Colonic mucosa (tissue), 4 donors: ENCODE measurements at regions of chr9 and their contacts with region 1.

Region 1: DNA sequence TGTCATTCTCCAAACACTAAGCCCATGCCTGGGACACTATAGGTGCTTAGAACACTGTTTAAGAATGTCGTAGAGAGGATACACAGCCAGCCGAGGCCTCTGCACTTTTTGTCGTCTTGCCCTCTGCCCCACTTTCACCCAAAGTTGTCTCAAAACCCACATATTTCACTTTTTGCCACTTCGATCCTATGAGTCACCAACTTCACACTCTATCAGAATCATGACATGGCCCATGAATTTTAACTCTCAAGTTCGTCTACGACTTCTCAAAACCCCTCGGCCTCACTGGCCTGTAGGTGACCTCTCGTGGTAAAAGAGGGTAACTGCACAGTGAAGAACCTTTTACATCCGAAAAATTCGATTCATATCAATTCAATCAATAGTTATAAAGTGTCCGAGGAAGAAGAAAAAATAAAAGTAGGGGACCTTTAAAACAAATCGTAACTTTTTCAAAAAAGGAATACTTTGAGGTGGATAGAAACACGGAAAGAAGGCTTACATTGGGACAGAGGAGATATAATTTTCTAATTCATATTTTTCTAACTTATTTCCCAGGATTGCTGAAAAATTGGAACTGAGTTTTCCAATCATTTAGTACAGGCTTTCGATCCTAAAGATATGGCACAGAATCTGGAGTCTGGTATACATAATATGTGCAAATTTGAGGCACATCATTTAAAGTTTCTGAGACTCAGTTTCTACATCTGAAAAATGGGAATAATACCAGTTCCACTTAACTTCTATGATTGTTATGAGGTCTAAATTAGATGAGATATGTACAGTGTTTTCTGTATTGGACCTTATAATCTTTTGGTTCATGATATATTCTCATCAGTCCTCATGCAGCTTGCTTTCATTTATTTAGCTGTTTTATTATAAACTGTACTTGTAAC is 122.6 kb downstream of the APBA1 start:
- DNase-seq: peak; percentile 31
- H3K4me3 ChIP-seq: no peak overlapping the region
- H3K27ac ChIP-seq: no peak overlapping the region
- H3K4me1 ChIP-seq: no peaks in the 10 kb centered on the region
- H3K27me3 ChIP-seq: no peaks in the 10 kb centered on the region
- CTCF ChIP-seq: peak; percentile 76

Region 2: GRCh38 chr9:68476847-68477246 is 1072.7 kb before region 1 on chr9:
- intact Hi-C with region 1: no loop called
- DNase-seq: no peak
- H3K4me3 ChIP-seq: no peak overlapping the region
- H3K27ac ChIP-seq: no peak overlapping the region
- H3K4me1 ChIP-seq: no peaks in the 10 kb centered on the region
- H3K27me3 ChIP-seq: no peaks in the 10 kb centered on the region
- CTCF ChIP-seq: no peak

Region 3: DNA sequence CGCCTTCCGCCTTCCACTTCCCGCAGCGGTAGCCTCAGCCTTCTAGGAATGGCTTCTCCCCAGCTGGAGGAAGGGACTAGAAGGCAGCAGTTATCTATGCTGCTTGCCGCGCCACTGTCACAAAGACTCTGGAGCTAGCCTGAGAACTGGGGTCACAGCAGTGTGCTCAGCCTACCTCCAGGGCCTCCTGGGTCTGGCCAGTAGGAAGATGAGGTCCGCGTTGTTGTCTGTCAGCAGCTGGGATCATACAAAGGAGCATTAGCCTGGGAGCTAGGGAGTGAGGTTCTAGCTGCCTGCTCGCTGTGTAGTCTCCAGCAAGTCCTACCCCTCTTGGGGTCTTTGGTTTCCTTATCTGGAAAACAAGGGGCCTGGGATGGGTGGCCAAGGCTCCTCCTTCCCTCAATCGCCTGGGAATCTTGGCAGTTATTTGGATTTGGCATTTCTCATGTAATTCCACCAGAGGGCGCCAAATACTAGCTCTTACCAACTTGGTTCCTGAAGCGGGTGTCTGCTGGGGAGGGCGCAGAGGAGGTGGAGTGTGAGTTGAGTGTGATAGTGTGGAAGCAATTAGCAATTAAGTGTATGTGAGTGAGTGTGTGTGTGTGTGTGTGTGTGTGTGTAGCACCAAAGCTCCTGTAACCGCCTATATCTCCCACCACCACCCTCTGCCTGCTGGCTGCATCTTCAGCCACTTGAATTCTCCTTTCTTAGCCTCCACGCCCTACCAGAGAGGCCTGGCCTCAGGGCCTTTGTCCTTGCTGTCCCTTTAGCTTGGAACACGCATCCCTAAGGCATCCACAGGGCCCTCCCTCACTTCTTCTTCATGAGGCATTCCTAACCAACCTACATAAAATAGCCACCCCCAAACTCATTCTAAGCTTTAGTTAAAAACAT is 127.4 kb before region 1 on chr9:
- intact Hi-C with region 1: loop called (anchors 2 kb)
- DNase-seq: peak; percentile 62
- H3K4me3 ChIP-seq: no peak overlapping the region
- H3K27ac ChIP-seq: no peak overlapping the region
- H3K4me1 ChIP-seq: no peaks in the 10 kb centered on the region
- H3K27me3 ChIP-seq: no peaks in the 10 kb centered on the region
- CTCF ChIP-seq: peak; percentile 78

Region 4: GRCh38 chr9:69466151-69466550 is 83.4 kb before region 1 on chr9:
- intact Hi-C with region 1: loop called (anchors 10 kb)
- DNase-seq: no peak
- H3K4me3 ChIP-seq: no peak overlapping the region
- H3K27ac ChIP-seq: no peak overlapping the region
- H3K4me1 ChIP-seq: peaks cover 6% of the 10 kb centered on the region
- H3K27me3 ChIP-seq: no peaks in the 10 kb centered on the region
- CTCF ChIP-seq: no peak

Region 5: GRCh38 chr9:69877854-69878514 is 328.4 kb after region 1 on chr9:
- intact Hi-C with region 1: loop called (anchors 10 kb)
- DNase-seq: no peak
- H3K4me3 ChIP-seq: no peak overlapping the region
- H3K27ac ChIP-seq: no peak overlapping the region
- H3K4me1 ChIP-seq: no peaks in the 10 kb centered on the region
- H3K27me3 ChIP-seq: no peaks in the 10 kb centered on the region
- CTCF ChIP-seq: peak; percentile 44